ENCODE measurements at regions of chr5 and their contacts with region 1.

Region 1: DNA sequence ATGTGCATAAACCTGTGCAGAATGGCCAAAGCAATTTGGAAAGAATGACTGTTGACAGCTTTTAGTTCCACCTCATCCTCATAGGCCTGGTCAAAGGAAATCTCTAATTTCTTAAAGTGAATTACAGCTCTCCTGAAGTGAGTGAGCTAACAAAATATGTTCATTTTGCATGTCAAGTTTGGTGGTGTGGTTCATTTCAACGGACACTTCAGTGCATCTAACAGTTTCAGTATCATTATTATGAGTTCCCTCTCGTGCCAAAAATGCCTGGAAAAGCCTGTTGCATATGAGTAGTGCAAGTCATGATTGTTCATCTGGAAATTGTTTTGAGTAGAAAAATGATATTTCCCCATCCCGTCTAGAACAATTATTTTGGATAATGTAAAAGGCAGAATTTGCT is 53.2 kb upstream of the HMHB1 start:
- DNase-seq: peak; percentile 51
- ATAC-seq: peak; percentile 78
- H3K4me3 ChIP-seq: no peak overlapping the region; the same call in 1 of the 2 replicates
- H3K27ac ChIP-seq: peak overlapping the region; percentile 59; the same call in 1 of the 2 replicates
- H3K4me1 ChIP-seq: peaks cover 32% of the 10 kb centered on the region
- H3K27me3 ChIP-seq: no peaks in the 10 kb centered on the region
- CTCF ChIP-seq: no peak
- EP300 ChIP-seq: peak; percentile 48 to 79; a peak in 2 of 4 replicates
- POLR2A ChIP-seq: no peak
- RAD21 ChIP-seq: no peak

Region 2: GRCh38 chr5:143244000-143244736 is 514.6 kb before region 1 on chr5:
- CTCF ChIA-PET with region 1: no interaction called
- POLR2A ChIA-PET with region 1: no interaction called
- RAD21 ChIA-PET with region 1: no interaction called
- SMC1A ChIA-PET with region 1: no interaction called
- in situ Hi-C with region 1: no loop called
- intact Hi-C with region 1: no loop called
- DNase-seq: no peak
- ATAC-seq: no peak
- H3K4me3 ChIP-seq: no peak overlapping the region
- H3K27ac ChIP-seq: no peak overlapping the region
- H3K4me1 ChIP-seq: no peaks in the 10 kb centered on the region
- H3K27me3 ChIP-seq: no peaks in the 10 kb centered on the region
- CTCF ChIP-seq: no peak
- EP300 ChIP-seq: no peak
- POLR2A ChIP-seq: no peak
- RAD21 ChIP-seq: no peak

Region 3: DNA sequence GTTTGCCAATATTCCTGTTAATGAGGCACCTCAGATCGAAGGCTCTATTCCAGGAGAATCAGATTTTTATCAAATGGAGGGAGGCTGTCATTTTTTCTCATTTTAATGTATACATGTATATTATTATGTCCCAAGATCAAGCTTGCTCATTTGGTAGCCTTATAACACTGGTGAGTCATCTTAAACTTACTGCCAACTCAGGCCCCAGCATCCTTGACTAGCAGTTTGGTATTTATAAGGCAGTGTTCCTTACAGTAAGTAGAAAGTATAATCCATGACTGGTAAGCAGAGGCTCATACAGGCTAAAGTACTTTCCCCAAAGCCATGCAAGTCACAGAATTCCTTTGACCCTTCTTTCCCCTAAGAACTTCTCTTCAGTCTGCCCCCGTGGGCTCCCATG is 264.6 kb before region 1 on chr5:
- CTCF ChIA-PET with region 1: no interaction called
- POLR2A ChIA-PET with region 1: no interaction called
- RAD21 ChIA-PET with region 1: no interaction called
- SMC1A ChIA-PET with region 1: no interaction called
- in situ Hi-C with region 1: no loop called
- intact Hi-C with region 1: no loop called
- DNase-seq: no peak
- ATAC-seq: no peak
- H3K4me3 ChIP-seq: no peak overlapping the region
- H3K27ac ChIP-seq: no peak overlapping the region
- H3K4me1 ChIP-seq: no peaks in the 10 kb centered on the region
- H3K27me3 ChIP-seq: no peaks in the 10 kb centered on the region
- CTCF ChIP-seq: no peak
- EP300 ChIP-seq: no peak
- POLR2A ChIP-seq: no peak
- RAD21 ChIP-seq: no peak

Region 4: GRCh38 chr5:143506881-143507551 is 251.7 kb before region 1 on chr5:
- CTCF ChIA-PET with region 1: no interaction called
- POLR2A ChIA-PET with region 1: no interaction called
- RAD21 ChIA-PET with region 1: no interaction called
- SMC1A ChIA-PET with region 1: interaction called, 3 read pairs
- in situ Hi-C with region 1: no loop called
- intact Hi-C with region 1: loop called (anchors 10 kb)
- DNase-seq: no peak
- ATAC-seq: no peak
- H3K4me3 ChIP-seq: no peak overlapping the region
- H3K27ac ChIP-seq: no peak overlapping the region
- H3K4me1 ChIP-seq: peaks cover 14% of the 10 kb centered on the region
- H3K27me3 ChIP-seq: no peaks in the 10 kb centered on the region
- CTCF ChIP-seq: no peak
- EP300 ChIP-seq: no peak
- POLR2A ChIP-seq: no peak
- RAD21 ChIP-seq: no peak

Region 5: DNA sequence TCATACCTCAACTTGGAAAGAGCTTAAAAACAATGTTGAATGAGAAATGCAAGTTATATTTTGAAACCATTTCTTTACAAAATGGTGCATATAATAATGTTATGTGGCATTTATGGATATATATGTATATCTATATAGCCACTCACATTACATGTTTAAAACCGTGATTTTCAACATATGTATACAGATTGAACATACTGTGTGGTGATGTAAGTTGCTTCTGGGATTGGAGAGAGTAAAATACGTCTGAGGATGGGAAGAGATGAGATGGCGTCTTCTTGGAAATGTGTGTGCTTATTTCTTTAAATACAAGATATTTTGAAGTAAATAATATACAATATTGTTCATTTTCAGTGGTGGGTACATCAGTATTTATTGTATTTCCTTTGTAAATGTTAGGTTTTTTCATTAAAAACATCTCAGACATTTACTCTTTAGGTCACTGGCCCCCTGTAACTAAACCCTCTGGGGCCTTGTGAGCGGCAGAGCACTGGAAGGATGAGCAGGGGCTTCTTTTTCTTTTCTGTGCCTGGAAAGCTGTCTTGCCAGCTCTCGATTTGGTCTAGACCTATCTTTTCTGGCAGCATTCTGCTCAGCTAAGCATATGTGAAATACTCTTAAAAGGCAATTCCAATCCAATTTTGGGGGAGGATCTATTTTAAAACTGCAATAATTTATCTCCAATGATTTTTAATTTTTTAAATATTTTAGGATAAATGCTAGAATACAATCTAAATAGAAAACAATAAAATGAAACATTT is 10.5 kb after region 1 on chr5:
- CTCF ChIA-PET with region 1: no interaction called
- POLR2A ChIA-PET with region 1: interaction called, 6 read pairs
- RAD21 ChIA-PET with region 1: interaction called, 5 read pairs
- SMC1A ChIA-PET with region 1: interaction called, 16 read pairs
- in situ Hi-C with region 1: no loop called
- intact Hi-C with region 1: no loop called
- DNase-seq: no peak
- ATAC-seq: no peak
- H3K4me3 ChIP-seq: no peak overlapping the region
- H3K27ac ChIP-seq: no peak overlapping the region
- H3K4me1 ChIP-seq: no peaks in the 10 kb centered on the region
- H3K27me3 ChIP-seq: no peaks in the 10 kb centered on the region
- CTCF ChIP-seq: no peak
- EP300 ChIP-seq: no peak
- POLR2A ChIP-seq: no peak
- RAD21 ChIP-seq: no peak

Region 6: GRCh38 chr5:143800715-143801114 is 42.0 kb after region 1 on chr5:
- CTCF ChIA-PET with region 1: interaction called, 3 read pairs
- POLR2A ChIA-PET with region 1: no interaction called
- RAD21 ChIA-PET with region 1: interaction called, 9 read pairs
- SMC1A ChIA-PET with region 1: interaction called, 13 read pairs
- in situ Hi-C with region 1: no loop called
- intact Hi-C with region 1: loop called (anchors 5 kb)
- DNase-seq: no peak
- ATAC-seq: peak; percentile 70
- H3K4me3 ChIP-seq: no peak overlapping the region
- H3K27ac ChIP-seq: no peak overlapping the region; the same call in 1 of the 2 replicates
- H3K4me1 ChIP-seq: peaks cover 10% of the 10 kb centered on the region
- H3K27me3 ChIP-seq: no peaks in the 10 kb centered on the region
- CTCF ChIP-seq: no peak
- EP300 ChIP-seq: no peak
- POLR2A ChIP-seq: no peak
- RAD21 ChIP-seq: no peak

Region 7: DNA sequence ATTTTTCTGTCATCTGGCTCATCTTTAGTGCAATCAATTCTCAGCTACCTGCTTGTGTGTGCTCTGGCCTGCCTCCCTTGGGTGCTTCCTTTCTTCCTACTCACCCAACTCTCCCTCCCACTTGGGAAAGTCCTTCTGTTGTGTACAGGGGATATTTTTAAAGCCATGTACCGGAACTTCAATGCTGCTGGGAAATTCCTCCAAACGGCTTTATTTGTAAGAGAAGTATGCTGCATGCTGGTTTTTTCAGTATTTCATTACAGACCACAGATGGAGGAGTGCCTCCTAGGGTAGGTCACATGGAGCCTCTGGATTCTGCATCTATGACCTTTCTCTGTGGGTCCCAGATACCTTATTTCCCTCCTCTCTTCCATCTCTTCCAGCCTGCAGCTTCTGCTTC is 47.8 kb after region 1 on chr5:
- CTCF ChIA-PET with region 1: interaction called, 3 read pairs
- POLR2A ChIA-PET with region 1: no interaction called
- RAD21 ChIA-PET with region 1: interaction called, 9 read pairs
- SMC1A ChIA-PET with region 1: interaction called, 13 read pairs
- in situ Hi-C with region 1: no loop called
- intact Hi-C with region 1: loop called (anchors 5 kb)
- DNase-seq: peak; percentile 60
- ATAC-seq: peak; percentile 90
- H3K4me3 ChIP-seq: peak overlapping the region; percentile 66
- H3K27ac ChIP-seq: peak overlapping the region; percentile 34; the same call in 1 of the 2 replicates
- H3K4me1 ChIP-seq: peaks cover 3% of the 10 kb centered on the region; the same call in 1 of the 2 replicates
- H3K27me3 ChIP-seq: no peaks in the 10 kb centered on the region
- CTCF ChIP-seq: no peak
- EP300 ChIP-seq: peak in 1 of 2 experiments; percentile 42; a peak in 1 of 4 replicates
- POLR2A ChIP-seq: no peak
- RAD21 ChIP-seq: peak; percentile 25; the same call in 1 of the 2 replicates